Activated CD4-positive, alpha-beta T cell treated with anti-CD3 and anti-CD28 coated beads, Interleukin-2, amount 10 ng/mL, durations not matched to agents 7 days and 5 days (primary cell): ENCODE measurements at regions of chr12 and their contacts with region 1.

Region 1: GRCh38 chr12:49043856-49044258 is 16.7 kb downstream of the KMT2D start:
- DNase-seq: peak; percentile 85
- H3K4me3 Mint-ChIP-seq: no peak overlapping the region
- H3K27ac Mint-ChIP-seq: no peak overlapping the region
- H3K4me1 Mint-ChIP-seq: peaks cover 3% of the 10 kb centered on the region
- H3K27me3 Mint-ChIP-seq: no peaks in the 10 kb centered on the region

Region 2: GRCh38 chr12:49055981-49056754 is 12.3 kb after region 1 on chr12:
- CTCF ChIA-PET with region 1: interaction called, 15 read pairs
- POLR2A ChIA-PET with region 1: no interaction called
- DNase-seq: peak; percentile 70
- H3K4me3 Mint-ChIP-seq: peak overlapping the region; percentile 94
- H3K27ac Mint-ChIP-seq: peak overlapping the region; percentile 19
- H3K4me1 Mint-ChIP-seq: peaks cover 44% of the 10 kb centered on the region
- H3K27me3 Mint-ChIP-seq: no peaks in the 10 kb centered on the region